Vagina (tissue), 2 donors: ENCODE measurements at regions of chr1 and their contacts with region 1.

Region 1: DNA sequence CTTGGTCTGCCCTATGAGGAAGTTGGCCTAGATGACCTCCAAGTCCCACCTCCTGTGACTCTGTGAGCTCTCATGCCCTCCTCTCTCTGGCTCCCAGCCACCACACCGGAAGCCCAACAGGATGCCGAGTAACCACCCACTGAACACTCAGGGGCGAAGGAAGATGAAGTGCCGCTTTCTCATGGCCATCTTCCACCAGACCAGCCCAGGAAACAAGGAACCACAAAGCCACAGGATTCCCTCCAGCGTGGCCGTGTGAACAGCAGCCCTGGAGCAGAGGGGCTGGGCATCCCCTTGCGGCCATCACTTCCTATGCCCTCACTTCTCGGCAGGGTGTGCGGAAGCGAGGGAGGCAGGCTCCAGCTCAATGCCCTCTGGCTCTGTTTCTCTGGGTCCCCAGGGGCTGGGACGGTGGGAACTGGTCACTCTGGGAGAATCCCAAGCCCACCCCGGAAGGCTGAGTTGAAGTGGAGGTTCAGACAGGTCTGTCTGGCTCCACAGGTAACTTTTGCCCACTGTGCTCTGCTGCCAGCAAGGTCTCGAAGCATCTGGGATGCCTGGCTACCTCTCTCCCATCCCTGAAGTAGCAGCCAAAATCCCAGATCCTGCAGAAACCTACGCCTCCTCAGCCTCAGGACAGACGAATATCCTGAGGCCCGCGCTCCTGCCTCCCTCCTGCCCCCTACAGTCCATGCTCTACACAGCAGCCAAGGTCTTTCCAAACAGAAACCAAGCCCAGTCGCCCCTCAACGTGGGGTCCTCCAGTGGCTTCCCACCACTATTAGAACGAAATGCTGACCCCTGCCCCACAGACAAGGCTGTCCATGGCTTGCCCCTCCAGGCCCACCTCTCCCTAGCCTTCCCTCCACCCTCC is 44.2 kb upstream of the ECE1 start:
- DNase-seq: no peak
- H3K4me3 ChIP-seq: peak overlapping the region; percentile 23 to 36
- H3K27ac ChIP-seq: peak overlapping the region; percentile 89
- H3K4me1 ChIP-seq: peaks cover 98% of the 10 kb centered on the region
- H3K27me3 ChIP-seq: no peaks in the 10 kb centered on the region
- CTCF ChIP-seq: peak in 2 of 3 experiments; percentile 65 to 83
- POLR2A ChIP-seq: no peak

Region 2: DNA sequence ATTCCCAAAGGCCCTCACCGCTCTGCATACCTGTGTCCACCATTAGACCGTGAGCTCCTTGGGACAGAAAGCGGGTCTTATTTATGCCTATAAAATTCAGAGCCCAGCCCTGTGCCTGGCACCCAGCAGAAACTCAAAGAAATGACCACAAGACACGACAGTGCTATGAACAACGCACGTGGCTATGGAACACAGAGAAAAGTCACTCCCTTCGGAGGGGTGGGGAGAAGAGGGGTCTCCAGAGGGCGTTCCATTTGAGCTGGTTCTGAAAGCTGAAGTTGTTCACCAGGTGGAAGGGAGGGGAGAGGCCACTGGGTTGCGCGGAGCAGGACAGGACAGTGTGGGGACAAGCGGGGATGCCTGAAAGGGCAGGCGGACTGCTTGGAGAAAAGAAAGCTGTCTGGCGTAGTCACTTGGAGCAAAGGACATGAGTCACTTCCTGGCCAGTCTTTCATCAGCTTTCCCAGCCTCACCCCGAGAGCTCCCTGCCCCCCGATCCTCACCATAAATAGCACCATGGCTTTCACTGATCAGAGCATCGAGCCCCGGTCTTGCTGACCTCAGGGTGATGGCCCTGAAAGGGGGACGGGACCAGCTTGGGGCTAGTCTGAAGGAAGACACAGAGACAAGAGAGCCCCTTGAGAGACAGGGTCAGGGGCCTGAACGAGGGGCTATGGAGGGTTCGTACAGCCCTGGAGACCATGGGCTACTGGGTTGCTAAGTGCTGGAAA is 72.7 kb before region 1 on chr1:
- intact Hi-C with region 1: loop called (anchors 5 kb)
- DNase-seq: no peak
- H3K4me3 ChIP-seq: peak overlapping the region in 1 of 2 donors; percentile 17
- H3K27ac ChIP-seq: peak overlapping the region; percentile 89
- H3K4me1 ChIP-seq: peaks cover 87% of the 10 kb centered on the region
- H3K27me3 ChIP-seq: no peaks in the 10 kb centered on the region
- CTCF ChIP-seq: no peak
- POLR2A ChIP-seq: no peak

Region 3: DNA sequence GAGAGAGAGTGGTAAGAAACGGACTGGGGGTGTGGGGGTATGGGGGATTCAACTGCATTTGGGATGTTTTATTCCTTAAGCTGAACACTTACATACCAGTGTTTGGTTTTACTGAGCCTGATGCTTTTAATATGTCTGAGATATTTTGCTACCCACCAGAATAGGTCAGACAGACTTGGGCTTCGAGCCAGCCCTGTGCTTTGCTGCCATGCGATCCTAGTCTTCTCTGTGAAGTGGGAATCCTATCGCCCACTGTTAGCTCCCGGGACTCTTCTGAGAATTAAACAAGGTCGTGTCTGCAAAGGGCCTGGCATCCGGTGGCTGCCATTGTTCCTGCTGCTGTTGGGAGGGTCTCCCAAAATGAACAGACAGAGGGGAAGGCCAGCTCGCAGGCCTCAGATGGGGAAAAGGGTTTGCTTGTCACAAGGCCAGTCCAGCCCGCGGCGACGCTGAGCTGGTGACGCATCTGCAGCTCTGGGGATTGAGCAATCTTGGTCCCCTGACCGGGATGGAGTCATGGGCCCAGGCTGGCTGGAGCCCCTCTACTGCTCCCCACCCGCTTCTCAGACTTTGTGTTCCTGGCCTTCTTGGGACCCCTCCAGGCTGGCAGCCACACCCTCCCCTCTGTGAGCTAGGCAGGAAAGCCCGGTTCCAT is 17.3 kb before region 1 on chr1:
- intact Hi-C with region 1: loop called (anchors 2 kb)
- DNase-seq: peak in 1 of 2 donors; percentile 95
- H3K4me3 ChIP-seq: no peak overlapping the region
- H3K27ac ChIP-seq: peak overlapping the region; percentile 86
- H3K4me1 ChIP-seq: peaks cover 99% of the 10 kb centered on the region
- H3K27me3 ChIP-seq: no peaks in the 10 kb centered on the region
- CTCF ChIP-seq: no peak
- POLR2A ChIP-seq: no peak